GM18951 (cell line): ENCODE measurements at regions of chr2 and their contacts with region 1.

Region 1: GRCh38 chr2:41806286-41806685 is 241.5 kb upstream of the PKDCC start:
- POLR2A ChIP-seq: no peak

Region 2: GRCh38 chr2:39913648-39914461 is 1892.4 kb before region 1 on chr2:
- in situ Hi-C with region 1: loop called (anchors 25 kb)
- POLR2A ChIP-seq: no peak